Prostate gland (tissue), 2 donors: ENCODE measurements at regions of chr16 and their contacts with region 1.

Region 1: DNA sequence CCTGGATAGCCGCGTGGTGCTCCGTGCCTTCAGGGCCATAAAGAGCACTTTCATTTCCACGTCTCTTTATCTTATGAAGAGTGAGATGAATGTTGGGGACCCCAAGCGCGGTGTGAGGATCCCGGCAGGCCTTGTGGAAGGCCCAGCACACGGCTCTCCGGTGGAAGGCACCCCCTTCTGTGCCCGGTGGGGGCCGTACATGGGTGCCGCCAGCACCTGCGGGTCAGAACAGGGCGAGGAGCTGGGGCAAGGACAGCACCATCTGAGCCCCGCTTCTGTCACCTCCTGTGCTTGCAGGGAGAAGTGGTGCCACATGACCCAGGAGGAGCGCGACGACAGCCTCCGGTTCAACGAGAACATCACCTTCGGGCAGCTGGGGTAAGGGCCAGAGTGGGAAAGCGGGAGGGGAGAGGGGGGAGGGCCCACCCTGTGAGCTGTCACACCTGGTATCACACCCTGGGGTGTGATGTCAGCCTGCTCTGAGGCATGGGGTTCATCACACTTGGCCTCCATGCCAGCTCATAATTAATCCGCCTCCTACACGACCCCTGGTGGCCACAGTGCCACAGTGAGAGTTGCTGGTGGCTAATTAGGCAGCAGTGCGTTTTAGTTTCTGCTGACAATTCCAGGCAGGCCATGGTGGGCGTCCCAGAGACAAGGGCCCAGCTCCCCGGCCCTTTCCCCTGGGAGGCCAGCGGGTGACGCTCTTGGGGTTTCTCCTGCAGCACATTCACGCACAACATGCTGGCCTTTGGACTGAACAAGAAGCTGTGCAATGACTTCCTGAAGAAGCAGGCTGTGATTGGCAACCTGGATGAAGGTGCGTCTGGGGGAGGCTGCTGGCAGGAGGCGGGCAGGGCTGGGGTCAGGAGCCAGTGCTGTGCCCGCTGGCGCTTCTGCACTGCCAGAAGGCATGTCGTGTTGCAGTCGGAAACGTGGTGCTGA is 25.7 kb downstream of the CIBAR2 start:
- DNase-seq: peak; percentile 57
- H3K4me3 ChIP-seq: no peak overlapping the region
- H3K27ac ChIP-seq: no peak overlapping the region
- H3K4me1 ChIP-seq: peaks cover 6% of the 10 kb centered on the region
- H3K27me3 ChIP-seq: no peaks in the 10 kb centered on the region
- CTCF ChIP-seq: peak; percentile 49 to 83 (median 64)
- POLR2A ChIP-seq: no peak

Region 2: GRCh38 chr16:84741340-84741830 is 345.2 kb before region 1 on chr16:
- intact Hi-C with region 1: loop called (anchors 10 kb)
- DNase-seq: no peak
- H3K4me3 ChIP-seq: no peak overlapping the region
- H3K27ac ChIP-seq: no peak overlapping the region
- H3K4me1 ChIP-seq: peaks cover 17% of the 10 kb centered on the region
- H3K27me3 ChIP-seq: no peaks in the 10 kb centered on the region
- CTCF ChIP-seq: no peak
- POLR2A ChIP-seq: no peak

Region 3: DNA sequence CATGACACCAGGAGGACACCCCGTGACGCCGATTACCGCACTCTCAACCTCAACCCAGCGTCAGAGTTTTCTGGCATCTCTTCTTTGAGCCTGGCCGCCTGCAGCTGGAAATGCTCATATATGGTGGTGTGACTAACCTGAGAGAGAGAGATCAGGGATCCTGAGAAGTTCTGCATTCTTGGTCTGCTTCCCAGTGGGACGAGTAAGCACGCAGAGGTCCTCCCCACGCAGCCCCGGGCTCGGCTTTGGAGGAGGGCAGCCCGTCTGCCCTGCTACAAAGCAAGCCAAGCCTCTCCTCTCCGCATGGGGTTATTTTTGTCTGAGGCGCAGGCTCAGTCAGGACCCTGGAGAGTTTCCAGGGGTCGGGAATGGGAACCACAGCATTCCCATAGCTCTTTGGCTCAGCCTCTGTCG is 250.4 kb before region 1 on chr16:
- intact Hi-C with region 1: no loop called
- DNase-seq: peak; percentile 61
- H3K4me3 ChIP-seq: no peak overlapping the region
- H3K27ac ChIP-seq: peak overlapping the region; percentile 85
- H3K4me1 ChIP-seq: peaks cover 32% of the 10 kb centered on the region
- H3K27me3 ChIP-seq: no peaks in the 10 kb centered on the region
- CTCF ChIP-seq: no peak
- POLR2A ChIP-seq: no peak

Region 4: GRCh38 chr16:84982434-84982833 is 104.2 kb before region 1 on chr16:
- intact Hi-C with region 1: loop called (anchors 5 kb)
- DNase-seq: peak; percentile 57
- H3K4me3 ChIP-seq: no peak overlapping the region
- H3K27ac ChIP-seq: peak overlapping the region in 1 of 2 donors; percentile 3
- H3K4me1 ChIP-seq: peaks cover 3% of the 10 kb centered on the region
- H3K27me3 ChIP-seq: no peaks in the 10 kb centered on the region
- CTCF ChIP-seq: peak in 3 of 4 experiments; percentile 22 to 64 (median 57)
- POLR2A ChIP-seq: no peak

Region 5: GRCh38 chr16:85027349-85027957 is 59.2 kb before region 1 on chr16 and contains the start of gene KIAA0513:
- intact Hi-C with region 1: loop called (anchors 5 kb)
- DNase-seq: peak; percentile 92
- H3K4me3 ChIP-seq: peak within 1 kb of the TSS; percentile 76 to 88
- H3K27ac ChIP-seq: peak within 1 kb of the TSS; percentile 87 to 95
- H3K4me1 ChIP-seq: peaks cover 27% of the 10 kb centered on the region
- H3K27me3 ChIP-seq: no peaks in the 10 kb centered on the region
- CTCF ChIP-seq: peak in 3 of 4 experiments; percentile 45 to 59 (median 50)
- POLR2A ChIP-seq: peak; percentile 99
- total RNA-seq, gene KIAA0513: 14.4 to 29.4 TPM

Region 6: DNA sequence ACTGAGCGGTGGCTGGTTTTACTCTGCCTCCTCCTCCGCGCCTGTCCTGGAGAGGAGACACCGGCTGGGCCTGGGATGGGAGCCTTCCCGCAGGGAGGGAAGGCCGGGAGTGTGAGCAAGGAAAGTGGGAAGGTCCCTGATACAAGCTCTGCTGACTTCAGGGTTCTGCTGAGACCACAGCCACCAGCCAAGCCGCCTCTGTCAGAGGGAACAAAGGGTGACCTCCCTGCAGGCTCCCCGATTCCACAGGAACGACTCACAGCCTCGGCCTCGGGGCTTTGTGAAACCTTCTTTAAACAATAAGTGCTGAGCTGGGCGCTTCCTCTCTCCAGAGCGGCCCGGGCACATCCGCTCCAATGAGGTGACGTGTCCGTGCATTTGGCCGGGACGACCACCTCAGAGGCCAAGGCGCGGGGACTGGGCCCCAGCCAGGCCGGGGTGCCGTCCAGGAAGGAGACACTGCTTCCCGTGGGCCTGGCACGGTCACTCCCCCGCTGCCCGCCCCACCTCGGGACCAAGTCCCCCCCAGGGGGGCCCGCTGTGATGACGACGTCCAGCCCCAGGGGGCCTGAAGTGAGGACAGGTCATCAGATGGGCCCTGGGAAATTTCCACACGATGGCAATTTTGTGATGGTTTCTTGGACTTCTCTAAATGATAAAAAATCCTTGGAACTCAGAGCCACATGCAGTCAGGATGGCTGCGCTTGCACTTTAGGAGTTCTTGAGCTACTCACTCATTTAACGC is 37.4 kb after region 1 on chr16:
- intact Hi-C with region 1: no loop called
- DNase-seq: no peak
- H3K4me3 ChIP-seq: no peak overlapping the region
- H3K27ac ChIP-seq: peak overlapping the region; percentile 57 to 63
- H3K4me1 ChIP-seq: no peaks in the 10 kb centered on the region
- H3K27me3 ChIP-seq: no peaks in the 10 kb centered on the region
- CTCF ChIP-seq: no peak
- POLR2A ChIP-seq: no peak